ENCODE measurements at regions of chr9 and their contacts with region 1.

Region 1: GRCh38 chr9:136790927-136791641 is at the start of gene TMEM141:
- DNase-seq: peak; percentile 100
- H3K4me3 Mint-ChIP-seq: peak within 1 kb of the TSS; percentile 83
- H3K27ac Mint-ChIP-seq: peak within 1 kb of the TSS; percentile 79
- H3K4me1 Mint-ChIP-seq: peaks cover 19% of the 10 kb centered on the region
- H3K27me3 Mint-ChIP-seq: no peaks in the 10 kb centered on the region
- total RNA-seq, gene TMEM141: 38.1 to 39.6 TPM

Region 2: DNA sequence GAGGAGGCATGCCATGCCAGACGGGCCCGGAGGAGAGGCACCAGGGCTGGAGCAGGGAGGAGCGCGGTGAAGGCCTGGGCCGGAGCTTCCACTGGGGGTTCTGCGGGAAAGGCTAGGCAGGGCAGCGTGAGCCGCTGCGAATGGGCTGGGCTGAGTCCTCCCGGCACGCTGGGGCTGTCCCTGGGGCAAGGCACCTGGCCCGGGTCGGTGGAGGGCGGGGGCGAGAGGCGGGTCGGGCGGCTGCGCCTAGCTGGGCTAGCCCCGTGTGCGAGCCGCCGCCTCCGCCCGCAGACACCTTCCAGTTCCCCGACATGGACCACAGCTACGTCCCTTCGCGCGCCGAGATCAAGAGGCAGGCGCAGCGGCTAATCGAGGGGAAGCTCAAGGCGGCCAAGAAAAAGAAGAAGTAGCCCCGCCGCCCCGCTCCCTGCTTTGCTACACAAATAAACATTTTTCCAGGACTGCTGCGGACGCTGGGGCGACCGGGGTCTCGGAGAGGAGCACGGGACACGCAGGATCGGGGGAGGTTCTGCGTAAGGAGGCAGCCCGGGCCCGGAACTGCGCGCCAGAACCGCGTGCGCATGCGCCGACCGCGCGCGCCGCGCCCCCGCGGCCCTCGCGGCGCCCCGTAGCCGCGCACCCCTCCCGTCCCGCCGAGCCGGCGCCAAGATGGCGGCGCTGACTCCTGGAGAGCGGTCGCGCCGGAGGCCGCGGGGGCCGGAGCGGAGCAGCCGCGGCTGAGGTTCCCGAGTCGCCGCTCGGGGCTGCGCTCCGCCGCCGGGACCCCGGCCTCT is 16.4 kb after region 1 on chr9 and contains the start of gene RABL6:
- CTCF ChIA-PET with region 1: interaction called, 28 read pairs
- intact Hi-C with region 1: loop called (anchors 2 kb)
- DNase-seq: peak; percentile 76
- H3K4me3 Mint-ChIP-seq: peak within 1 kb of the TSS; percentile 82
- H3K27ac Mint-ChIP-seq: peak within 1 kb of the TSS; percentile 88
- H3K4me1 Mint-ChIP-seq: peaks cover 32% of the 10 kb centered on the region
- H3K27me3 Mint-ChIP-seq: no peaks in the 10 kb centered on the region
- total RNA-seq, gene RABL6: 74.9 to 82.7 TPM

Region 3: GRCh38 chr9:136865735-136866103 is 74.6 kb after region 1 on chr9:
- CTCF ChIA-PET with region 1: no interaction called
- intact Hi-C with region 1: loop called (anchors 5 kb)
- DNase-seq: no peak
- H3K4me3 Mint-ChIP-seq: peak overlapping the region; percentile 87
- H3K27ac Mint-ChIP-seq: peak overlapping the region; percentile 69
- H3K4me1 Mint-ChIP-seq: peaks cover 20% of the 10 kb centered on the region
- H3K27me3 Mint-ChIP-seq: no peaks in the 10 kb centered on the region

Region 4: GRCh38 chr9:136991993-136992818 is 201.1 kb after region 1 on chr9 and contains the start of gene PAXX:
- CTCF ChIA-PET with region 1: interaction called, 4 read pairs
- intact Hi-C with region 1: loop called (anchors 1 kb)
- DNase-seq: peak; percentile 95
- H3K4me3 Mint-ChIP-seq: peak within 1 kb of the TSS; percentile 83
- H3K27ac Mint-ChIP-seq: peak within 1 kb of the TSS; percentile 81
- H3K4me1 Mint-ChIP-seq: peaks cover 16% of the 10 kb centered on the region
- H3K27me3 Mint-ChIP-seq: peaks cover under 1% of the 10 kb centered on the region
- total RNA-seq, gene PAXX: 75.9 to 76.8 TPM

Region 5: DNA sequence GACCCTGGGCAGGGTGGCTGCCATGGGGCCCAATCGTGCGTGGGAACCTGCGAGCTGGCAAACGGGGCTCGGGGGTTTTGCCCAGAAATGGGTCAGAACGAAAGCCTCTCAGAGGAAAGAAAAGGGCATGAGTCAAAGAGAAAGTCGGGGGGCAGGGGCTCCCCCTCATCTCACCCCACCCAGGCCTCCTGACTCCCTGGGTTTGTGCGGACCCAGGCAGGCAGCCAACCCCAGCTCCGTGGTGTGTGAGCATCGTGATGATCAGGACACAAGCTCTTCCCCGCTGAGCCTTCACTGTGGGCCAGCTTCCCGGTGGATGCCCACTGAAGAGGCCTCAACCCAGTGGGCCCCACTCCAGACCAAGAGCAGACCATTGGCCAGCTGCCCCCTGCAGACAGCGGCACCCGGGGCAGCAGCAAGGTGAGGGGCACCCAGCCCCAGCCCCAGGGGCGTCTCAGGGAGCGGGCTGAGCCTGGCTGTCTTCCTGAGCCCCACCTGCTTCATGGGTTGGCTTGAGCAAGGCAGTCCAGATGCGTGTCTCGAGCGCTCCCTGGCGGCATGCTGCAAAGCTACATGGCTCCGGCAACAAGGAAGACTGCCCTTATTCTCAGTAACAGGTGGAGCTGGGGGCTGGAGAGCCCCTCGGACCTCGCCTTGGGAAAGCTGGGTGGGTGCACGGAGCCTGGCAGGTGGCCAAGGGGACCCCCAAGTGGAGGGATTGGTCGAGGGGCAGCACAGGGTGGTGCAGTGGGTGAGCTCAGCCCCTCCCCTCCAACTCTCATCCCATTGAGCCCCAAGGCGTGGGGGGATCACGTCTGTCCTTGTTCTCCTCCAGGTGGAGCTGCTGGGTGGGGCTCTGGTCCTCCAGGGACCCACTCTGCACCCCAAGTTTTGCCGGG is 244.0 kb after region 1 on chr9:
- CTCF ChIA-PET with region 1: interaction called, 27 read pairs
- intact Hi-C with region 1: loop called (anchors 1 kb)
- DNase-seq: peak; percentile 93
- H3K4me3 Mint-ChIP-seq: peak overlapping the region; percentile 59
- H3K27ac Mint-ChIP-seq: peak overlapping the region; percentile 79
- H3K4me1 Mint-ChIP-seq: peaks cover 29% of the 10 kb centered on the region
- H3K27me3 Mint-ChIP-seq: peaks cover 2% of the 10 kb centered on the region

Region 6: DNA sequence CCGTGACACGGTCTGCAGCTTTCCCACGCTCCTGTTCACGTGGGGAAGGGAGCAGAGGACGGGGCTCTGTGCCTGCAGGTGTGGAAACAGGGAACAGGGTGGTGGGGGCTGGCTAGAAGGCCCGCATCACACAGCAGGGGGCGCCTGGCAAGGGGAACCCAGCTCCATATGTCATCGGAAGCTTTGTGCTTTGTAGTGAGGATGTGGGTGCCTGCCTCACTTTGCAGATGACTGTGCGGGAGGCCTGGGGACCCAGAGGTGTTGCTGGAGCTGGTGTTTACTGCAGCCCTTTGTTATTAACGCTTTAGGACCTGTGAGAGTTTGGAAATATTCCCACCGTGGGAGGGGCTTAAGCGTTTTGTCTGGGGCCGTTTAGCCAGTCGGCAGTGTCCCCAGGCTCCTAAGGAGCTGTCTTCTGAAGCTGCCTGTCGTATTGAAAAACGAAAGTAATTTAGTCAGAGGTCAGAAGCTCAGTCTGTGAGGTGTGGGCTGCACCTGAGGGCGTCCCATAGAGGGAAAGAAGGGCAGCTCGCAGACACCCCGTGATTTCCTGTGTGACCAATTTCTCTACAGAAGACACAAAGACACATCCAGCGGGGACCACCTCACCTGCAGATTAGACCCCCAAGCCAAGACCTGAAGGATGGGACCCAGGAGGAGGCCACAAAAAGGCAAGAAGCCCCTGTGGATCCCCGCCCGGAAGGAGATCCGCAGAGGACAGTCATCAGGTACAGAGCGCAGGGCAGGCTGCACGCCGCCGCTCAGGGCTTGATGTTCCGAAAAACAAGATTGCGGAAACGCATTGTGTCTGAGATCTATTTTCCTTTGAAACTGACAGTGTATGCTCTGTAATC is 304.8 kb after region 1 on chr9:
- CTCF ChIA-PET with region 1: interaction called, 3 read pairs
- intact Hi-C with region 1: loop called (anchors 1 kb)
- DNase-seq: peak; percentile 95
- H3K4me3 Mint-ChIP-seq: peak overlapping the region; percentile 66
- H3K27ac Mint-ChIP-seq: peak overlapping the region; percentile 88
- H3K4me1 Mint-ChIP-seq: peaks cover 19% of the 10 kb centered on the region
- H3K27me3 Mint-ChIP-seq: no peaks in the 10 kb centered on the region

Measured in activated naive CD4-positive, alpha-beta T cell treated with anti-CD3 and anti-CD28 coated beads for 36 hours (primary cell).